Endothelial cell of umbilical vein (primary cell): ENCODE measurements at regions of chr2 and their contacts with region 1.

Region 1: GRCh38 chr2:11465497-11466406 is at the start of gene E2F6:
- DNase-seq: peak; percentile 93
- H3K4me3 ChIP-seq: peak within 1 kb of the TSS; percentile 45 to 82 (median 46)
- H3K27ac ChIP-seq: peak within 1 kb of the TSS; percentile 73
- H3K4me1 ChIP-seq: peaks cover 21% of the 10 kb centered on the region
- H3K27me3 ChIP-seq: no peaks in the 10 kb centered on the region
- CTCF ChIP-seq: no peak
- POLR2A ChIP-seq: no peak
- total RNA-seq, gene E2F6: 14.6 and 15.7 TPM in 2 replicates

Region 2: DNA sequence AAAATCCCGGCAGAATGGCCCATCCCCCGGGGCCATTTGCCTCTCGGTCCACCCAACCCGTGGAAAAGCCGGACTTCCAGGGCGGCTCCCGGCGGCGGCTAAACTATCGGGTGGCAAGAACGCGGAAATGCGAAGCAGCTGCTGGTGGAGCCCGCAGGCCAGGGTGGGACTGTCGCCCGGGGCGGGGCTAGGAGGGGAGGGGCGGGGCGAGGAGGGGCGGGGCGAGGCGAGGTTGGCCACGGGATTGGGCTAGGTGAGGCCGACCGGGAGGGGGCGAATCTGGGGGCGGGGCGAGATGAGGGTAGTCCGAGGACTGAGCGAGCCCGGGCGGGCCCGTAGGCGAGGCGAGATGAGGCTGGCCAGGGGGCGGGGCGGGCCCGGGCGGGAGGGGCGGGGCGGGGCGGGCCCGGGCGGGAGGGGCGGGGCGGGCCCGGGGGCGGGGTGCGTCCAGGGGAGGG is 310.8 kb before region 1 on chr2:
- CTCF ChIA-PET with region 1: no interaction called
- POLR2A ChIA-PET with region 1: no interaction called
- dilution Hi-C with region 1: no loop called
- intact Hi-C with region 1: loop called (anchors 1 kb)
- DNase-seq: peak; percentile 91
- H3K4me3 ChIP-seq: peak overlapping the region; percentile 50 to 62 (median 61)
- H3K27ac ChIP-seq: peak overlapping the region; percentile 90
- H3K4me1 ChIP-seq: peaks cover 11% of the 10 kb centered on the region
- H3K27me3 ChIP-seq: no peaks in the 10 kb centered on the region
- CTCF ChIP-seq: no peak
- POLR2A ChIP-seq: no peak

Region 3: GRCh38 chr2:11435036-11435435 is 30.7 kb before region 1 on chr2:
- CTCF ChIA-PET with region 1: no interaction called
- POLR2A ChIA-PET with region 1: no interaction called
- dilution Hi-C with region 1: no loop called
- intact Hi-C with region 1: no loop called
- DNase-seq: no peak
- H3K4me3 ChIP-seq: no peak overlapping the region
- H3K27ac ChIP-seq: no peak overlapping the region
- H3K4me1 ChIP-seq: no peaks in the 10 kb centered on the region
- H3K27me3 ChIP-seq: no peaks in the 10 kb centered on the region
- CTCF ChIP-seq: no peak
- POLR2A ChIP-seq: no peak

Region 4: GRCh38 chr2:11446733-11447248 is 19.0 kb before region 1 on chr2:
- CTCF ChIA-PET with region 1: interaction called, 11 read pairs
- POLR2A ChIA-PET with region 1: no interaction called
- dilution Hi-C with region 1: no loop called
- intact Hi-C with region 1: no loop called
- DNase-seq: peak; percentile 71
- H3K4me3 ChIP-seq: no peak overlapping the region
- H3K27ac ChIP-seq: no peak overlapping the region
- H3K4me1 ChIP-seq: no peaks in the 10 kb centered on the region
- H3K27me3 ChIP-seq: no peaks in the 10 kb centered on the region
- CTCF ChIP-seq: peak; percentile 72 to 75
- POLR2A ChIP-seq: no peak

Region 5: GRCh38 chr2:11477994-11478393 is 12.2 kb after region 1 on chr2:
- CTCF ChIA-PET with region 1: interaction called, 14 read pairs
- POLR2A ChIA-PET with region 1: no interaction called
- dilution Hi-C with region 1: no loop called
- intact Hi-C with region 1: no loop called
- DNase-seq: peak; percentile 69
- H3K4me3 ChIP-seq: no peak overlapping the region
- H3K27ac ChIP-seq: no peak overlapping the region
- H3K4me1 ChIP-seq: no peaks in the 10 kb centered on the region
- H3K27me3 ChIP-seq: peaks cover 25 to 41% of the 10 kb centered on the region in 2 experiments
- CTCF ChIP-seq: peak; percentile 68 to 73
- POLR2A ChIP-seq: no peak